MCF 10A (cell line): ENCODE measurements at regions of chr7 and their contacts with region 1.

Region 1: DNA sequence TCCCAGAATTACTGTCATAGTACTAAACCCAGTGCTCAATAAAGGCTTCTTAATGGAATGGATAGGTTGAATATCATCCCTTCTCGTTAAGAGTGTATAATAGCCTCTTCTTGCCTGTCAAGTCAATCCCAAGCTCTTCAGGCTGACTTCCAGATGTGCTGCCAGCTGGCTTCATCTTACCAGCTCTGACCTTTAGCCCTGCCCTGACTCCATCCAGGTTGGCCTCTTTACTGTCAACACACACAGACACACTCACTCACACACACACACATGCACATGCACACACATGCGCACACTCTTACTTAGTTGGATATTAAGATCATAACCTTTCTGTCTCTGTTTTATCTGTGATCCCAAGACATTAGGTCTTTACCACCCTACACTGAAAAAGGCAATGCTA is 49.1 kb downstream of the ASB4 start:
- DNase-seq: no peak
- H3K4me3 Mint-ChIP-seq: no peak overlapping the region
- H3K27ac Mint-ChIP-seq: no peak overlapping the region
- H3K4me1 Mint-ChIP-seq: no peaks in the 10 kb centered on the region
- H3K27me3 Mint-ChIP-seq: peaks cover 23% of the 10 kb centered on the region
- CTCF ChIP-seq: no peak

Region 2: GRCh38 chr7:95684037-95684436 is 149.2 kb after region 1 on chr7:
- CTCF ChIA-PET with region 1: interaction called, 1,114 read pairs
- POLR2A ChIA-PET with region 1: interaction called, 54 read pairs
- intact Hi-C with region 1: no loop called
- DNase-seq: peak; percentile 60
- H3K4me3 Mint-ChIP-seq: no peak overlapping the region
- H3K27ac Mint-ChIP-seq: no peak overlapping the region
- H3K4me1 Mint-ChIP-seq: peaks cover 4% of the 10 kb centered on the region
- H3K27me3 Mint-ChIP-seq: no peaks in the 10 kb centered on the region
- CTCF ChIP-seq: peak; percentile 19